GM10248 (cell line): ENCODE measurements at regions of chr2 and their contacts with region 1.

Region 1: GRCh38 chr2:219560037-219560892 is 11.1 kb downstream of the OBSL1 start:
- DNase-seq: peak; percentile 74
- CTCF ChIP-seq: peak; percentile 61

Region 2: DNA sequence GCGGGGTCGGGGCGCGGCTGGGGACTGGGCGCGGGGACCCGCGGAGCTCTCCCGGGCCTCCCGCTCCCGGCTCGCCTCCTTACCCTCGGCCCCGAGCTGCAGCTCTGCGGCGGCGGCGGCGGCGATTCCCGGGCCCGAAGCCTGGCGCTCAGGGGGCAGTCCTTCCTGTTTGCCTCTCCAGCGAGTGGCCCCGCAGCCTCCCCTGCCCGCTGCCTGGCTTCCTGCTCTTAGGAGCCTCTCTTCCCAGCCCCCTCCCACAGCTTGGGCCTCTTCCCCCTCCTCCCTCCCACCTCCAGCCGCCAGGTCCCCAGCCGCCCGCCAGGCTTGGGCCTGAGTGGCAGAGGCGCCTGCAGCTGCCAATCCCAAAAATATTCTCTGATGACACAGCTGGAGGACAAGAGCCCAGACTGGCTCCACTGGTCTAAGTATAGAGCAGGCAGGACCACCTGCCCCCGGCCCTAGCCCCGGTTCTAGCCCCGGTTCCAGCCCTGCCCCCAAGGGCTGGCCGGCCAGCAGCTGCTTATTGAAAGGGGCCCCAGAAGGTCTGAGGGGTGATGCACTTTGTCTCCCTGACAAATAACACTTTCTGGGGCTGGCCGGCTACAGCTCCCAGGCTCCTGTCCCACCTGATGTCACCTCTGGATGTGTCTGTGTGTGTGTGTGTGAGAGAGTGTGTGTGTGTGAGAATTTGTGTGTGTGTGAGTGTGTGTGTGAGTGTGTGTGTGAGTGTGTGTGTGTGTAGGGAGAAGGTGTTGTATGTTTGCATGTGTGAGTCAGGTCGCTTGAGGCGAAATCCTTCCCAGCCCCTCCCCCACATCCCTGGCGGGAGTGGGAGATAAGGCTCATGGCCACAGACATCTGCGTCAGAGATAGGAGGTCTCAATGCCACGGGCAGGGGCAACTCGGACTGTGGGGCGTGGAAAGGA is 11.3 kb after region 1 on chr2 and contains the start of gene OBSL1:
- CTCF ChIA-PET with region 1: interaction called, 38 read pairs
- POLR2A ChIA-PET with region 1: no interaction called
- DNase-seq: no peak
- CTCF ChIP-seq: no peak

Region 3: DNA sequence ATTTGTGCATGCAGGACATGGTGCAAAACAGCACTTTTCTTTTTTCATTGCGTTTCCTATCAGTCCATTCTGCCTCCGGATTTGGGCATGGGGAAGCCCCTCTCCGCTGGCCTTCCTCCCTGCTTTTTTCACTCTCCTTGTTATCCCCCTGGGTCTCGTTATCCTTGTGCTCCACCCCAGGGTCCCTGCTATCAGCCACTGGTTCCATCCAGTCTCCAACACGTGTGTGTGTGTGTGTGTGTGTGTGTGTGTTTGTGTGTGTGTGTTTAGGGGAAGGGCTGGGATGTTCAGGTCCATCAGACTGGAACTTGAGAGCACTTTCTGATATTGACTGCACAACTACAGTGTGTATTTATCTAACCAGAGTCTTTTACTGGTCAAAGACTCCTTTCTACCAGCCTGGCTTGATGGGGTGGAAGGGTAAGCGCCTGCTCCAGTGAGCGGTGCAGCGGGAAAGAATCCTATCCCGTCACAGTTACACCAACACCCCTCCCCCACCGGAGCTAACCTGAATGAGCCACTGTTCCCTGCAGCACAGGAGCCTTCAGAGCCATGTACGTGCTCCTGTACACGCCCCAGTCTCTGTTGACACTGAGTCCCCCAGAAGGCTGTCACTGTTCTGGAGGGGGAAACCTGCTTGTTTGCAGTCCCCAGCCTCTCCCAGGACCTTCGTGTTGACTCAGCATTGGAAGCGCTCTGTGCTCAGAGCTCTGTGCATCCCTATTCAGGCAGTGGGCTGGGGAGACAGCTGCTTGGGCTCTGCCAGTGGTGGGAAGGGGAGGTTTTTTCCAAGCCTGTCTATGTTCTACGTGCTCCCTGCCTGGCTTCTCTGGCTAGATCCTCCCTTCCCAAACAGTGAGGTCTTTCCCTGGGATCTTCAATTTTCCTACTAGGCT is 16.5 kb after region 1 on chr2:
- CTCF ChIA-PET with region 1: interaction called, 38 read pairs
- POLR2A ChIA-PET with region 1: no interaction called
- DNase-seq: no peak
- CTCF ChIP-seq: no peak

Region 4: GRCh38 chr2:219597552-219598307 is 37.5 kb after region 1 on chr2 and contains the start of gene STK11IP:
- CTCF ChIA-PET with region 1: interaction called, 21 read pairs
- POLR2A ChIA-PET with region 1: no interaction called
- DNase-seq: peak; percentile 96
- CTCF ChIP-seq: no peak

Region 5: GRCh38 chr2:219603771-219604170 is 43.5 kb after region 1 on chr2:
- CTCF ChIA-PET with region 1: interaction called, 21 read pairs
- POLR2A ChIA-PET with region 1: no interaction called
- DNase-seq: no peak
- CTCF ChIP-seq: no peak

Region 6: DNA sequence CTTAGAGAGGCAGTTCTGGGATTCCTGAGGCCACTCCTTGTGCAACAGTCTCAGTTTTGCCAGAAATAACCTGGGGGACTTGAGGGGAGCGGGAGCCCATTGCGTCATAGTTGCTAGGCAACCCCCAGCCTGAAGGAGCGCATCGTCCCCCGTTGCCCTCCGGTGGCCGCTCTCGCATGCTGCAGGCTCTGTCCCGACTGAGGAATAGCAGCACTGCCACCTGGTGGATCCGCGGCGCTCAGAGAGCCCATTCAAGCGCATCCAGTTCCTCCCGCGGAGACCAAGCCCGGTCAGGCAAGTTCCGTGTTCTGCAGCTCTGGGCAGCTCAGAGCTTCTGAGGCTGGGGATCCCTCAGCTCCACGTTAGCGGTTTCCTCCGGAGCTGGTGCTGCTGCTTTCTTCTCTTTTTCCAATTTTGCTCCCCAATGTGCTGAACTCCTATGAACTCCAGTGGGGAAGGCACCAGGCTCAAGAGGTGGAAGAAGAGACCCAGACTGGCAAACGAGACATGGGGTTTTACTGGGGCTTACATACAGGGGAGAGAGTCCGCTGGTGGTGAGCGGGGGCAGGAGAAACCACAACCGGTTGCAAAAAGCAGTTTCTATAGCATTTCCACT is 82.3 kb after region 1 on chr2:
- CTCF ChIA-PET with region 1: interaction called, 24 read pairs
- POLR2A ChIA-PET with region 1: no interaction called
- DNase-seq: peak; percentile 94
- CTCF ChIP-seq: peak; percentile 100

Region 7: GRCh38 chr2:219658196-219658846 is 98.1 kb after region 1 on chr2:
- CTCF ChIA-PET with region 1: interaction called, 11 read pairs
- POLR2A ChIA-PET with region 1: no interaction called
- DNase-seq: no peak
- CTCF ChIP-seq: no peak

Region 8: DNA sequence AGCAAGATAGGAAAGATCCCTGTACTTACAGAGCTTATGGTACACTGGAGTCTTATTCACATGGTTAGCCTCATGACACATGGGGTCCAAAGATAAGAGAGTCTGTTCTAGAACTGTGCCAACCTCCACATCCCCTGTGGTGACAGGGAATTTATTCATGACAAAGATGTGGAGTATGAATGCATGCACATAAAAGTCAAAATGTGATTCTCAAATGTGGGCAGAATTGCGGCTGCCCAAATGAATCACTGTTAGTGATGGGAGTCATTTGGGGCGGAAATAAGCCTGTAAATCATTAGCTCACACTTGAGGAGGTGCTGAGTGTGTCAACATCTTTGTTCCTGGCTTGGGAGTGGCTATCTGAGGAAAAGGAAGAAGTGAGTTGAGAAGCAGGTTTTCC is 627.8 kb after region 1 on chr2:
- CTCF ChIA-PET with region 1: no interaction called
- POLR2A ChIA-PET with region 1: no interaction called
- DNase-seq: no peak
- CTCF ChIP-seq: no peak